ENCODE measurements at regions of chr4 and their contacts with region 1.

Region 1: GRCh38 chr4:47836641-47837093 is 1.2 kb downstream of the CORIN start:
- DNase-seq: peak; percentile 76
- CTCF ChIP-seq: peak; percentile 78

Region 2: GRCh38 chr4:47715716-47716416 is 120.8 kb before region 1 on chr4:
- in situ Hi-C with region 1: loop called (anchors 10 kb)
- DNase-seq: no peak
- CTCF ChIP-seq: no peak

Measured in GM13976 (cell line).